HCT116 (cell line): ENCODE measurements at regions of chr10 and their contacts with region 1.

Region 1: DNA sequence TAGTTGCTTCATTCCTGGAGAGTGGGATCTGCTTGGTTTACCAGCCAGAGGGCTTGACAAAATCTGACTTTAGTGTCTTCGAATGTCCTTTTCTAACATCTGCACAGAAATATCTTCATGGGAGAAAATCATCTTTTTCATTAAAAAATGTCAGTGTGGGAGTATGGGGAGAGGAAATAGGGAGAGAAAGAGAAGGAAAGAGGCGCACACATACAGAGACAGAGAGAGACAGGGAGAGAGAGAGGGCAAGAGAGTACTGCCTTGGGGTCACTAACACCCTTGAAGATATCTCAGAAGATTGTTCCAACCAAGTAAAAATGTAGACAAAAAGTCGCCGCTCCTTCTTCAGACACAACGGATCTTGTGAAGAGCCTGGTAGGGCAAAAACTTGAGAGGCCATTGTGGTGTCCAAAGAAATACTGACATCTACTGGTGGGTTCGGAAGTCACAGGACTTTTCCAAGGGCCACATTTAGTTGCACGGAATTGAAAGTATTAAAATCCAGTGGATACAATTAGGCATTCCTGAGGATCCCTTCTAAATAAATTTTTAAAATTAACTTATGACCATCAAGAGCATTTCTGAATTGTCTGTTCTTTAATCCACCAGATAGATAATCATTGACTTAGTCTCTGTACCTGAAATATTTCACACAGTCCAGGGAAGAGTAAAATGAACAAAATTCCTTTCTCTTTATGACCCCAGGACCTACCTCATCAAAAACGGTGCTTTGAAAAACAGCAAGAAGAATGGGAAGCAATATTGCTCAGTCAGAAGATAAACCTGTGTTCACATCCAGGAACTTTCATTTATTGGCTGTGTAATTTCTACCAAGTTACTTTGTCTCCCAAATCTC is 29.7 kb downstream of the VIM start:
- DNase-seq: peak; percentile 60
- ATAC-seq: peak; percentile 94
- H3K4me3 ChIP-seq: peak overlapping the region in 1 of 2 experiments; percentile 17; a peak in 1 of 4 replicates
- H3K27ac ChIP-seq: no peak overlapping the region
- H3K4me1 ChIP-seq: peaks cover 2 to 8% of the 10 kb centered on the region in 2 experiments; a peak in 3 of 4 replicates
- H3K27me3 ChIP-seq: no peaks in the 10 kb centered on the region
- CTCF ChIP-seq: peak; percentile 74 to 83 (median 83)
- POLR2A ChIP-seq: no peak
- RAD21 ChIP-seq: peak; percentile 91

Region 2: DNA sequence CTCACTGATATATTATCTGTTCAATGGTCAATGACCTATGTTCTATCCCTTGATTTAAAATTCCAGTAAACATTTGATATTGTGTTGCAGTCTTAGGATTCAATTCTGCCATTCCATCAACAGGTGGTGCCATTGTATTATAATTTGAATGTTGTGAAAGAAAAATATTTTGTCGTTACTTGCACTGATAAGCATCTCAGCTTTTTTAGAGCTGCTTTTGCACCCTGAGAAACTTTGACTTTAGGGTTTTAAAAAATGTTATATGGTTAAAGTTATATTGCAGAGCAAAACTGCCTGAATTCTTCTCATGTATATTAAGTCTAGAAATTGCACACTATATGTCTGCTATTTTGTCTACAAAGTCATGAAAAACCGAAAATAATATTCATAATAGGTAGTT is 1378.6 kb before region 1 on chr10:
- CTCF ChIA-PET with region 1: no interaction called
- POLR2A ChIA-PET with region 1: no interaction called
- RAD21 ChIA-PET with region 1: no interaction called
- intact Hi-C with region 1: loop called (anchors 1 kb)
- DNase-seq: no peak
- ATAC-seq: peak; percentile 53
- H3K4me3 ChIP-seq: no peak overlapping the region
- H3K27ac ChIP-seq: no peak overlapping the region
- H3K4me1 ChIP-seq: no peaks in the 10 kb centered on the region
- H3K27me3 ChIP-seq: peaks cover 33% of the 10 kb centered on the region
- CTCF ChIP-seq: peak; percentile 48 to 82 (median 59); a peak in 5 of 6 replicates
- POLR2A ChIP-seq: no peak
- RAD21 ChIP-seq: peak; percentile 69

Region 3: DNA sequence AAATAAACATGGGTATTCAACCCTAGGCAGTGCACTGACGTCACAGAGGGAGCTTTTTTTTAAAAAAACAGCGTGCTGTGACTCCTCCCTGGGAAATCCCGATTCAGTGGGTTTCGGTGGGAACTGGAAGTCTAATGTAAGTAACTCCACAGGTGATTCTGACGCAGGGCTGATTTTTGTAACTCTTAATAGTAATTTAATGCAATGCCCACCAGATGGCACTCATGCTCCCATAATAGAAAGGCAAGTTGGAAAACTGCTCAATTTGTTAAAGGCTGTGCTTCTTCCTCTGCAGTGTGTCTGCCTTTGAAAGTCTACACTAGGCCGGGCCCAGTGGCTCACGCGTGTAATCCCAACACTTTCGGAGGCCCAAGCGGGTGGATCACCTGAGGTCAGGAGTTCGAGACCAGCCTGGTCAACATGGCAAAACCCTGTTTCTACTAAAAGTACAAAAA is 429.6 kb before region 1 on chr10:
- CTCF ChIA-PET with region 1: interaction called, 3 read pairs
- POLR2A ChIA-PET with region 1: interaction called, 3 read pairs
- RAD21 ChIA-PET with region 1: no interaction called
- intact Hi-C with region 1: loop called (anchors 1 kb)
- DNase-seq: peak; percentile 83
- ATAC-seq: peak; percentile 90
- H3K4me3 ChIP-seq: no peak overlapping the region
- H3K27ac ChIP-seq: no peak overlapping the region
- H3K4me1 ChIP-seq: no peaks in the 10 kb centered on the region; a peak in 1 of 4 replicates
- H3K27me3 ChIP-seq: no peaks in the 10 kb centered on the region
- CTCF ChIP-seq: peak; percentile 46 to 57 (median 54); a peak in 5 of 6 replicates
- POLR2A ChIP-seq: no peak
- RAD21 ChIP-seq: peak; percentile 83

Region 4: DNA sequence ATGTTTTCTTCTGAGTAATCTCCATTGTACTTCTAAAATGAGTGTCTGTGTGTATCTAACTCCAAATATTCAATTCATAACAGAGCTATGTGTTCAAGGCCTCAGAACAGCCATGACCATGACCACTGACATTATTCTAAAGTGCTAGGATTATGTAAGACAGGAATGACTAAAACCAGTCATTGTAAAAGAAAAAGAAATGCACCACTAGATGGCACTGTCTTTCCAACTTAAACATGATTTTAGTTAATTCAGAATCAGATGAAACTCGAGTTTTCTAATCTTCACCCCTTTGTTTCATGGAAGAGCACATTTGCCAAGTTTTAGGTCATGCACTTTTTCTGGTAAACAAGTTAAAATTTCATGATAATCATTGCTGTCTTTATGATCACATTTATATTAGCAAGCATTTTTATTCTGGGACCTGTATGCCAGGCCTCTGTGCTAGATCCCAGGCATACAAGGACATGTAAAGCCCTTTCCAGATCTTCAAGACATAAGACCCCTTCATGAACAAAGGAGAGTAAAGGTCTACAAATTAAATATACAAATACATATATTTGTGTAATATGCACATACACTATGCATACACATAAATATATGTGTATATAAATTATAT is 414.3 kb before region 1 on chr10:
- CTCF ChIA-PET with region 1: interaction called, 5 read pairs
- POLR2A ChIA-PET with region 1: no interaction called
- RAD21 ChIA-PET with region 1: no interaction called
- intact Hi-C with region 1: loop called (anchors 1 kb)
- DNase-seq: peak; percentile 58
- ATAC-seq: peak; percentile 68
- H3K4me3 ChIP-seq: no peak overlapping the region
- H3K27ac ChIP-seq: no peak overlapping the region
- H3K4me1 ChIP-seq: no peaks in the 10 kb centered on the region
- H3K27me3 ChIP-seq: no peaks in the 10 kb centered on the region
- CTCF ChIP-seq: peak; percentile 23 to 74 (median 72); a peak in 4 of 6 replicates
- POLR2A ChIP-seq: no peak
- RAD21 ChIP-seq: peak; percentile 82